Right cardiac atrium (tissue), 5 donors: ENCODE measurements at regions of chr3 and their contacts with region 1.

Region 1: DNA sequence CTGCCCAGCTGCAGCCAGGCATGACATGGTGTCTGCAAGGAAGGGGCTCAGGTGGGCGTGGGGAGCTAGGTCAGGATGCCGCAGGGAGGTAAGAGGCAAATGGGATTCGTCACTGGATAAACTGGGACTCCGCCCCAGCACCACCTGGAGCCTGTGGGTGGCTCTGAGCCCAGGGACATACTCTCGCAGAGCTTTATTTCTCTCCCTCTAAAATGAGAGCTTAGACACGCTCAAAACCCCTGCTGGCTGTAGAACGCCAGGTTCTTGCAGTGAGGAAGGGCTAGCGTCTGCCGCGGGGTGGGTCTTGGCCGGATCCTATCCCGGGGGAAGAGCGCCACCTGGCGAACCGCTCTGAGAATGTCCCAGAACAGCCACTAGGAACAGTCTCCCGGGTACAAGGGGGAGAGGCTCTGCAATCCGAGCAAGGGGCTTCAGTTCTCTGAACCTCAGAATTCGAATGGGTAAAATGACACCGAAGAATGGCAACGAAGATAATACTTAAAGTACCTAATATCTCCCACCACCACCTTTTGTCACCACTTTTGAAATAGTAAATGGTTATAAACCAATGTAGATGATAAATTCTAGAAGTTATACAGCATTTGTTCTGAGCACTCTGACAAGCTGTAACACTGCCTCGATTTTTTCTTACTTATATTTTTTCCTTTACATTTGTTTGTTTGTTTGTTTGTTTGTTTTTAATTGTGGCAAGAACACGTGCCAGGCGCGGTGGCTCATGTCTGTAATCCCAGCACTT is 53.2 kb upstream of the SRGAP3 start:
- DNase-seq: peak; percentile 81 to 91 (median 90)
- ATAC-seq: peak; percentile 94 to 95
- H3K4me3 ChIP-seq: no peak overlapping the region
- H3K27ac ChIP-seq: no peak overlapping the region
- H3K4me1 ChIP-seq: no peaks in the 10 kb centered on the region
- H3K27me3 ChIP-seq: no peaks in the 10 kb centered on the region

Region 2: GRCh38 chr3:8970971-8971589 is 331.5 kb before region 1 on chr3:
- intact Hi-C with region 1: loop called (anchors 2 to 5 kb)
- DNase-seq: peak in 2 of 3 donors; percentile 46 to 65
- ATAC-seq: peak; percentile 38 to 68
- H3K4me3 ChIP-seq: no peak overlapping the region
- H3K27ac ChIP-seq: no peak overlapping the region
- H3K4me1 ChIP-seq: no peaks in the 10 kb centered on the region
- H3K27me3 ChIP-seq: peaks cover 3% of the 10 kb centered on the region

Region 3: GRCh38 chr3:8987645-8988383 is 314.8 kb before region 1 on chr3:
- intact Hi-C with region 1: loop called in 1 of 4 experiments (anchors 5 kb)
- DNase-seq: peak; percentile 58 to 86 (median 77)
- ATAC-seq: peak; percentile 54 to 68
- H3K4me3 ChIP-seq: no peak overlapping the region
- H3K27ac ChIP-seq: no peak overlapping the region
- H3K4me1 ChIP-seq: no peaks in the 10 kb centered on the region
- H3K27me3 ChIP-seq: no peaks in the 10 kb centered on the region

Region 4: GRCh38 chr3:9078561-9079240 is 223.9 kb before region 1 on chr3:
- intact Hi-C with region 1: loop called in 1 of 4 experiments (anchors 10 kb)
- DNase-seq: no peak
- ATAC-seq: no peak
- H3K4me3 ChIP-seq: no peak overlapping the region
- H3K27ac ChIP-seq: no peak overlapping the region
- H3K4me1 ChIP-seq: no peaks in the 10 kb centered on the region
- H3K27me3 ChIP-seq: no peaks in the 10 kb centered on the region

Region 5: GRCh38 chr3:10041034-10041433 is 738.4 kb after region 1 on chr3:
- intact Hi-C with region 1: no loop called
- DNase-seq: no peak
- ATAC-seq: no peak
- H3K4me3 ChIP-seq: no peak overlapping the region
- H3K27ac ChIP-seq: no peak overlapping the region
- H3K4me1 ChIP-seq: no peaks in the 10 kb centered on the region
- H3K27me3 ChIP-seq: no peaks in the 10 kb centered on the region